Esophagus squamous epithelium (tissue), 5 donors: ENCODE measurements at regions of chr15 and their contacts with region 1.

Region 1: GRCh38 chr15:77507911-77508310 is 87.2 kb downstream of the HMG20A start:
- DNase-seq: no peak
- H3K4me3 ChIP-seq: peak overlapping the region in 1 of 4 donors; percentile 22
- H3K27ac ChIP-seq: peak overlapping the region; percentile 59 to 85 (median 69)
- H3K4me1 ChIP-seq: peaks cover 30 to 56% (median 39%) of the 10 kb centered on the region in 3 donors
- H3K27me3 ChIP-seq: no peaks in the 10 kb centered on the region
- CTCF ChIP-seq: no peak
- POLR2A ChIP-seq: no peak

Region 2: GRCh38 chr15:77118882-77119321 is 389.0 kb before region 1 on chr15:
- intact Hi-C with region 1: loop called (anchors 10 kb)
- DNase-seq: no peak
- H3K4me3 ChIP-seq: no peak overlapping the region
- H3K27ac ChIP-seq: no peak overlapping the region
- H3K4me1 ChIP-seq: peaks cover 0 to 10% (median 0%) of the 10 kb centered on the region in 3 donors
- H3K27me3 ChIP-seq: no peaks in the 10 kb centered on the region
- CTCF ChIP-seq: peak; percentile 50 to 74 (median 62)
- POLR2A ChIP-seq: no peak